A673 (cell line): ENCODE measurements at regions of chr12 and their contacts with region 1.

Region 1: DNA sequence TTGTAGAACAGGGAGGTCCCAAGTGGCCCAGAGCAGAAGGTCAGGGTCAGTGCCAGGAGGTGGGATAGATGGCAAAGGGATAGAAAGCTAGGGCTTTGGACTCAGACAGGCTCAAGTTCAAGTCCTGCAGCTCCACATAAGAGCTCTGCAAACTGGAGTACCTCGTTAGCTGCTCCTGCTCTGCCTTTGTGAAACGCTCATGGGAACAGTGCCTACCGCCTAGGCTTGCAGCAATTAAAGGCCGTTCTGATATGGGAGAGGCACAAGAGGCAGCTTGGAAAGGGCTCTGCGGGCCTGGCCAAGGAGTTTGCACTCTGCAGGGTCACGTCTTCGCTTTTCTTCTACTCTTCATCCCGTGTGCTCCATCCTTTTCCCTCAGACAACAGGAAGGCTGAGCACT is 54.1 kb downstream of the MAP1LC3B2 start:
- DNase-seq: no peak
- H3K4me3 ChIP-seq: no peak overlapping the region
- H3K27ac ChIP-seq: no peak overlapping the region
- H3K4me1 ChIP-seq: no peaks in the 10 kb centered on the region
- H3K27me3 ChIP-seq: no peaks in the 10 kb centered on the region
- CTCF ChIP-seq: no peak

Region 2: DNA sequence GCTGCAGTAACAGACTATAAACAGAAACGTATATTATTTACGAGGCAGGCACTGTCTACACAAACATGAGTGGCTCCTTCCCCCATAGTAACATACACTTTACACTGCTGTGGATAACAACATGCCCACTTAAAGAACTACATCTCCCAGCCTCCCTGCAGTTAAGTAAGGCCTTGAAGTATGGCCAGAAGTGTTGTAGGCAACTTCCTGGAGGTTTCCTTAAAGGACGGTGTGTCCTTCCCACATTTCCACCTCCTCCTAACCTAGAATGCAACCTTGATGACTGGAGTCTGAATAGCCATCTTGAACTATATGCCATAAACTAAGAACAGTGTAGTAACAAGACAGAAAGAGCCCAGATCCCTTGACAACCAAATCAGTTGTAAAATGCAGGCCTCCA is 356.0 kb before region 1 on chr12:
- CTCF ChIA-PET with region 1: no interaction called
- POLR2A ChIA-PET with region 1: interaction called, 10 read pairs
- intact Hi-C with region 1: no loop called
- DNase-seq: peak; percentile 53
- H3K4me3 ChIP-seq: no peak overlapping the region
- H3K27ac ChIP-seq: no peak overlapping the region
- H3K4me1 ChIP-seq: peaks cover 27% of the 10 kb centered on the region
- H3K27me3 ChIP-seq: no peaks in the 10 kb centered on the region
- CTCF ChIP-seq: no peak

Region 3: DNA sequence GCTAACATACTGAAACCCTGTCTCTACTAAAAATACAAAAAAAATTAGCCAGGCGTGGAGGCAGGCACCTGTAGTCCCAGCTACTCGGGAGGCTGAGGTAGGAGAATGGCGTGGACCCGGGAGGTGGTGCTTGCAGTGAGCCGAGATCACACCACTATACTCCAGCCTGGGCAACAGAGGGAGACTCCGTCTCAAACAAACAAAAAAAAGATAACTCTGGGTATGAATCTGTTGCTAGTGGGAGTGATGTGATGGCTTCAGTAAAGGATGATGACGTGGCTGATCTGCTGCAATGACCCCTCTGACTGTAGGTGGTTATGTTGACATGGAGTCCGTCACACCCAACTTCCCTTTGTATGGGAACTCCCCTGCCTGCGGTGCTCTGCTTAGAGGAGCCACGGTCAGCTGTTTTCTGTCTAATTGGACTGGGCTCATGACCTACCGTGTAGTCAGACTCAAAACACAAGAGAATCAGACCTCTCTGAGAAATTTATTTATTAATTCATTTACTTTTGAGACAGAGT is 276.7 kb before region 1 on chr12:
- CTCF ChIA-PET with region 1: no interaction called
- POLR2A ChIA-PET with region 1: no interaction called
- intact Hi-C with region 1: no loop called
- DNase-seq: no peak
- H3K4me3 ChIP-seq: no peak overlapping the region
- H3K27ac ChIP-seq: no peak overlapping the region
- H3K4me1 ChIP-seq: peaks cover 3% of the 10 kb centered on the region
- H3K27me3 ChIP-seq: no peaks in the 10 kb centered on the region
- CTCF ChIP-seq: no peak

Region 4: GRCh38 chr12:116708826-116709756 is 95.8 kb after region 1 on chr12:
- CTCF ChIA-PET with region 1: no interaction called
- POLR2A ChIA-PET with region 1: no interaction called
- intact Hi-C with region 1: no loop called
- DNase-seq: peak; percentile 88
- H3K4me3 ChIP-seq: peak overlapping the region; percentile 16
- H3K27ac ChIP-seq: no peak overlapping the region
- H3K4me1 ChIP-seq: peaks cover 23% of the 10 kb centered on the region
- H3K27me3 ChIP-seq: no peaks in the 10 kb centered on the region
- CTCF ChIP-seq: peak; percentile 80

Region 5: GRCh38 chr12:117394491-117394890 is 781.2 kb after region 1 on chr12:
- CTCF ChIA-PET with region 1: no interaction called
- POLR2A ChIA-PET with region 1: interaction called, 13 read pairs
- intact Hi-C with region 1: no loop called
- DNase-seq: no peak
- H3K4me3 ChIP-seq: no peak overlapping the region
- H3K27ac ChIP-seq: no peak overlapping the region
- H3K4me1 ChIP-seq: no peaks in the 10 kb centered on the region
- H3K27me3 ChIP-seq: no peaks in the 10 kb centered on the region
- CTCF ChIP-seq: no peak